Activated naive CD4-positive, alpha-beta T cell treated with anti-CD3 and anti-CD28 coated beads for 36 hours (primary cell): ENCODE measurements at regions of chr2 and their contacts with region 1.

Region 1: DNA sequence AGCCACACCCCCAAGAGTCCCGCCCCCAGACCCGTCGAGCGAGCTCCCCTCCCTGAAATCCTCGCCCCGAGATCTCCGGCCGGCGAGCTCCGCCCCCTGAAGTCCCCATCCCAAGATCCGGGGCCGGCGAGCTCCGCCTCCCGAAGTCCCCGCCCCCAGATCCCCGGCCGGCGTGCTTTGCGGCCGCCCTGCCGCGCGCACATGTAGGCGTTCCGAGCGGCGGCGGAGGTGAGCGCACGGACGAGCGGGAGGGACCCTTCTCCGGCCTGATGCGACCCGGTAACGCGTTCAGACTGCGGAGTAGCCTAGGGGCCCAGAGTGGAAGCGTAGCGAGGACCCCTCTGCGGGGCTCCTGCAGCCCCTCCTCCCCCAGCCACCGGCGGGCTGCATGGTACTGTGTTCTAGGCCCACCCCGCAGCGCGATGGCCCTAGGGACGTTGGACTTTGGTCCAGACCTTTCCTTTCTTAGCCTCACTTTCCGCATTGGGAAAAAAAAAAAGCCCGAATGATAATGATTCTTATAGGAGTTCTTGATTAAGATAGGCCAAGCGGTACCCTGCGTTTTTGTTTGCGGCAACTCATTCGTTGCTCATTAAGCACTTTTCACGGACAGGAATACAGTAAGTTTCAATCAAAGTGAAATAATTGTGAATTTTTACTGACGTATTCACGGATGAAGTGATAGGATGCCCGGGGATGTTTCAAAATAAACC is at the start of gene TMEM177:
- DNase-seq: peak; percentile 89
- H3K4me3 Mint-ChIP-seq: peak within 1 kb of the TSS; percentile 81
- H3K27ac Mint-ChIP-seq: peak within 1 kb of the TSS; percentile 62
- H3K4me1 Mint-ChIP-seq: peaks cover 41% of the 10 kb centered on the region
- H3K27me3 Mint-ChIP-seq: no peaks in the 10 kb centered on the region
- total RNA-seq, gene TMEM177: 11.9 to 13.3 TPM

Region 2: GRCh38 chr2:118443596-118443995 is 1235.6 kb before region 1 on chr2:
- CTCF ChIA-PET with region 1: no interaction called
- intact Hi-C with region 1: no loop called
- DNase-seq: no peak
- H3K4me3 Mint-ChIP-seq: no peak overlapping the region
- H3K27ac Mint-ChIP-seq: no peak overlapping the region
- H3K4me1 Mint-ChIP-seq: no peaks in the 10 kb centered on the region
- H3K27me3 Mint-ChIP-seq: peaks cover 2% of the 10 kb centered on the region

Region 3: DNA sequence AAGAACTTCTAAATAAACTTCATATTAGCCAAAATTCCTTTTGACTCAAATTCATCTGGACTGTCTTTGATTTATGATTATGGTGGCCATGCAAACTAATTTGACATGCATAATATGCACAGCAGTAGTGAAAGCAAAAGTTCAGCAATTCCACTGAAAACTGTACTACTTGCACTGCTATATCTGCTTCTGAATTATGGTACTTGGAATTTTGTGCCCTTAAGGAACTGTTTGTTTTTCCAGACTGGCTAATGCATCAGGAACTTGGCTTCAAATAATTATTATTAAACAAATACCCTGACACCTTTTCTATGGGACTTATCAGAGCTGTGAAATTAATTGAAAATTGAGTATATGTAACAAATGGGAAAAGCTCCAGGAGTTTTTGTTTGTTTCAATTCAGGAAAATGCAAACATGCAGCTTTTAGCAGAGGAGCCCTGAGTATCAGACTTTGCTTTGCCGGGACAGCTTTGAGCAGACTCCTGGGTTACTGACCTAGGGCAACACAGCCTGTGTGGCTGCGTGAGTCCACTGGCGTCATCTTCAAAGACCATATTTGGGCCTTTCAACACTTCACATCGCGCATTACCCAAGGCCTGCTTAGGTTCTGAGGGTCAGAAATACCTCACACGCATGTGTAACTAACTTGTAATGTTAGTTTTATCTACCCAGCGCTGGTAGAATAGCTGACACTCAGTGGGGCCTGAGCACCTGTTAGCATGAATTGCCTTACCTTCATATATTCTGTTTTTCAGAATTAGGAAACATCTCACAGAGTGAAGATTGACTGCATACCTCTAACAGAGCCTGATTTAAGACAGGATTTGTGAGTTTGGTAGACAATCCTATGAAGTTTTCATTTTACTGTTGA is 99.5 kb before region 1 on chr2:
- CTCF ChIA-PET with region 1: no interaction called
- intact Hi-C with region 1: no loop called
- DNase-seq: no peak
- H3K4me3 Mint-ChIP-seq: no peak overlapping the region
- H3K27ac Mint-ChIP-seq: no peak overlapping the region
- H3K4me1 Mint-ChIP-seq: no peaks in the 10 kb centered on the region
- H3K27me3 Mint-ChIP-seq: peaks cover 5% of the 10 kb centered on the region

Region 4: DNA sequence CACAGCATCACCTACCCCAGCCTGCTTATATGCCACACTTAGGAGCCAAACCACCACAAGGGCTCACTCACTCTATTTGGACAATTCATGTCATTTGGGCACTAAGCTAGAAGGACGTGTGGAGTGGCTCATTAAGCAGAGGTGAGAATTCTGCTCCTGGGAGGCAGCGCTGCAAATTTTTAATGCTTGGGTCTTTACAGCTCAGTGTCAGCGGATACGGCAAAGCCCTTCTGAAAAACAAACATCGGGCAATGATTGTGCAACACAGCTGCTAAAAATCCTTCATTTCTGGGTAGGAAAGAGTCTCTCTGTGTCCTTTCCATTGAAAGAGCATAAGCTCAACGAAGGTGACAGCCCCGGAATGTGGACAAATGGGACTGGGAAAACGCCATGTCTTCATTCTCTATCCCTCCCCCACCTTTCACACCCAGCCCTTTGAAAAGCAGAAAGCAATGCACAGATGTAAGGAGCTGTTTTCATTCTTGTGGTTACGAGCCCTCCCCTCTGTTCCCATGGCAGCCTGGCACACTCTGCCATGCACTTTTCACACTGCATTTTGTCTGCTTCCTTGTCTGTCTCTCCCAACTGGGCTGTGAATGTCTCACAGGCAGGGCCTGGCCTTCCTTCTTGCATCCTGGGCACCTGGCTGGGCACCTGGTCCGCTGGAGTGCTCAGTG is 15.8 kb after region 1 on chr2:
- CTCF ChIA-PET with region 1: interaction called, 3 read pairs
- intact Hi-C with region 1: loop called (anchors 1 kb)
- DNase-seq: peak; percentile 51
- H3K4me3 Mint-ChIP-seq: peak overlapping the region; percentile 32
- H3K27ac Mint-ChIP-seq: no peak overlapping the region
- H3K4me1 Mint-ChIP-seq: peaks cover 48% of the 10 kb centered on the region
- H3K27me3 Mint-ChIP-seq: no peaks in the 10 kb centered on the region

Region 5: DNA sequence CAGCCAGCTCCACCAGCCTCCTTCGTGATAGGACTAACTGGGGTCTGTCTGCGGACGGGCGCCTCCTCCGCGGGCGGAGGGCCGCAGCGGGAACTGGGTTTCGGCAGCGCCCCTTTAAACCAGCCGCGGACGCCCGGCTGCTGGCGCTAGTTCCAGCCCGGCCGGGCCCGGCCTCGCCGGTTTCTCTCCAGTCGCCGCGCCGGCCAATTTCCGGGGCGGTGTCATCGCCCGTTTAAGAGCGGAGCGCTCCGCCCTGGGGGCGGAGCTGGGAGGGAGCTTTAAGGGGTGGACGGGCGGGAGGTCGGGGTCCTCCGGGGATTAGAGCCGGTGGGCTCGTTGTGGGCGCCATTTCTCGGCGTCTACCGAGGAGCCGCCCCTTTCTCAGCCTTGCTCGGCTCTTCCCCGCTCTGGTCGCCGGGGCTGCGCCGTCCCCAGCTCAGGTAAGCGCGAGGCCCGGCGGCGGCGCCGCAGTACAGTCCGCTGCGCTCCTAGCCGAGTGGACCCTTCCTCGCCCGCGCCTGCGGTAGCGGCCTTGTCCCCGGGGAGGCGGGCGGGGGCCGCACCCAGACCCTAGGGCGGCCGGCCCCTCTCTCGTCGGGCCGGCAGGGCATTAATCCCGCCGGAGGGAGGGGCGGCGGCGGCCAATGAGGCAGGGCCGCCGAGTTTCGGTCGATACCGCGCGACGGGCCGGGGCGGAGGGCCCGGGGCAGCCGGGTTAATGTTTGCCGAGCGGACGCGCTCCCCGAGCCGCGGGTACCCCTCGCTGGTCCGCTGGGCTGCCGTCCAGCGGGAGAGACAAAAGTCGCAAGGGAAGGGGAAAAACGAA is 333.8 kb after region 1 on chr2 and contains the start of gene EPB41L5:
- CTCF ChIA-PET with region 1: no interaction called
- intact Hi-C with region 1: loop called (anchors 1 kb)
- DNase-seq: peak; percentile 79
- H3K4me3 Mint-ChIP-seq: peak within 1 kb of the TSS; percentile 77
- H3K27ac Mint-ChIP-seq: no peak within 1 kb of the TSS
- H3K4me1 Mint-ChIP-seq: peaks cover 8% of the 10 kb centered on the region
- H3K27me3 Mint-ChIP-seq: no peaks in the 10 kb centered on the region
- total RNA-seq, gene EPB41L5: 2.3 to 2.5 TPM

Region 6: DNA sequence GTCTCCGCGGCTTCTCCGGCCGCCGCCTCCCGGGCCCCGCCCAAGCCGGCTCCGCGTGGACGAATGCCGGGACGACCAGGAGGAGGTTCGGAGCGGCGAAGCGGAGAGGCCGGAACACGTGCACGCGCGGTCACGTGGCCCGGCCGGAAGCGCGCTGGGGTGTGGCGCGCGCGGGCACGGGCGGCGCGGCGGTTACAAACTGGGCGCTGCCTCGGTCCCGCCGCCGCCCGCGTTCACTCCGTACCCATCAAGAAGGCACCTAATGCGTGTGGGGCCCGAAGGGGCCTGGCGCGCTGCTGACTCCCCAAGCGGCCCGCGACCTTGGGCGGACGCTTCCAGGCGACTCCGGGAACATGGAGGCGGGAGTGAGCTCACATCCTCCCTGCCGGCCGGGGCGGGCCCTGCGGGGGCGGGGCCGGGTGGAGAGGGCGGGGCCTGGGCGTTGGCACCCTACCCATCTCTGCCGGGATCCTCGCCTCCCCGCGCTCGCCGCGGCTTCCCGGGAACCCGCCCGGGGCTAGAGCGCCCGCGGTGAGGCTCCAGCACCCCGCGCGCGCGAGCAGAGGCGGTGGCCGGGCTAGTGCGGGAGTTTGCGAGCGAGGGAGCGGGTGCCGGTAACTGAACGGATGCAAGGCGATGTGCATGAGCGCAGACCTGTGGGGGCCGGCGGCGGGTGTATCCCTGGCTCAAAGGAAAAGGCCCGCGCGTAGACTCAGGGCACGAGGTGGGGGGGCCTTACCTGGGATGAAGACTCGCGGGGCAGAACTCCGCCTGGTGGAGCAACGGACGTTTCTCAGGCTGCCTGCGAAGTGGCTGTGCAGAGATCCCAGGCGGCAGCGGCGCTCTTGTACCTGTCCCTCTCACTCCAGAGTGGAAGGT is 544.1 kb after region 1 on chr2 and contains the start of gene TMEM185B:
- CTCF ChIA-PET with region 1: no interaction called
- intact Hi-C with region 1: loop called (anchors 2 kb)
- DNase-seq: peak; percentile 93
- H3K4me3 Mint-ChIP-seq: peak within 1 kb of the TSS; percentile 80
- H3K27ac Mint-ChIP-seq: peak within 1 kb of the TSS; percentile 87
- H3K4me1 Mint-ChIP-seq: peaks cover 43% of the 10 kb centered on the region
- H3K27me3 Mint-ChIP-seq: no peaks in the 10 kb centered on the region
- total RNA-seq, gene TMEM185B: 11.4 to 12.2 TPM